Right ventricle myocardium inferior (tissue), 1 donor: ENCODE measurements at regions of chr7 and their contacts with region 1.

Region 1: DNA sequence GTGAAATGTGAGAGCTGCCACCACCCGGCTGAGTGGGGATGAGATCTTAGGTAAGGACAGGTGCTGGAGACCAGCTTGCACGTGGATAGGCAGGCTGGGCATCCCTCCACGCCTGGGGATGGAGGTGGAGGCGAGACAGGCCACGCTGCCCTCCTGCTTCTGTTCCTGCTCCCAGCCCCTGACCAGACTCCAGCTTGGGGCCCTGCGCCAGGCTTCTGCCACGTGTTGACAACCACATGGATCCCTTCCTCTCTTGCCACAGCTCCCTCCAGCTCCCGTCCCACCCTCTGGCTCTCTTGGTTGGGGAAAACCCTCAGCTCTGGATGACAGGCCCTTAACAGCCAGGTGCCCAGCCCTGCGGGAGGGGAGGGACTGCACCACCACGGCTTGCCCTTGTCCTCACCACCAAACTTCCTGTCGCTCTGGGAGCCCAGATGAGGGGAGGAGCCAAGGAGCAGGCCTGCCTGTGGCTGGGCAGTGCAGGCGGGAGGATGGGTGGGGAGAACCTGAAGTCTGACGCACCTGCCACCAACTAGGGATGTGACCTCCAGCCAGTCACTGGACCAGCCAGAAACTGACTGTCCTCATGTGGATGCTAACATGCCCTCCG is 36.0 kb downstream of the KCNH2 start:
- DNase-seq: no peak
- ATAC-seq: peak; percentile 68

Region 2: DNA sequence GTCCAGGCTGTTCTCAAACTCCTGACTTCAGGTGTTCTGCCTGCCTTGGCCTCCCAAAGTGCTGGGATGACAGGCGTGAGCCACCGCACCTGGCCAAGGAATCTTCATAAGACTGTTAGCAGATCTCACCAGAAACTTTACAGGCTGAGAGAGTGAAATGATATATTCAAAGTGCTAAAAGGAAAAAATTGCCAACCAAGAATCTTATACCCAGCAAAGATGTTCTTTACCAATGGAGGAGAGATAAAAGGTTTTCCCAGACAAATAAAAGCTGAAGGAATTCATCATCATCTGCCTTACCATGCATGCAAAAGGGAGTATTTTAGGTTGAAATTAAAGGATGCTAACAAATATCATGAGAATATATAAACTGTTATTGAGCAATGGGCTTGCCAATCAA is 403.8 kb before region 1 on chr7:
- intact Hi-C with region 1: no loop called
- DNase-seq: no peak
- ATAC-seq: no peak

Region 3: GRCh38 chr7:150903606-150904005 is 38.5 kb before region 1 on chr7:
- intact Hi-C with region 1: loop called (anchors 5 kb)
- DNase-seq: peak; percentile 85
- ATAC-seq: peak; percentile 91